HepG2 (cell line): ENCODE measurements at regions of chr3 and their contacts with region 1.

Region 1: DNA sequence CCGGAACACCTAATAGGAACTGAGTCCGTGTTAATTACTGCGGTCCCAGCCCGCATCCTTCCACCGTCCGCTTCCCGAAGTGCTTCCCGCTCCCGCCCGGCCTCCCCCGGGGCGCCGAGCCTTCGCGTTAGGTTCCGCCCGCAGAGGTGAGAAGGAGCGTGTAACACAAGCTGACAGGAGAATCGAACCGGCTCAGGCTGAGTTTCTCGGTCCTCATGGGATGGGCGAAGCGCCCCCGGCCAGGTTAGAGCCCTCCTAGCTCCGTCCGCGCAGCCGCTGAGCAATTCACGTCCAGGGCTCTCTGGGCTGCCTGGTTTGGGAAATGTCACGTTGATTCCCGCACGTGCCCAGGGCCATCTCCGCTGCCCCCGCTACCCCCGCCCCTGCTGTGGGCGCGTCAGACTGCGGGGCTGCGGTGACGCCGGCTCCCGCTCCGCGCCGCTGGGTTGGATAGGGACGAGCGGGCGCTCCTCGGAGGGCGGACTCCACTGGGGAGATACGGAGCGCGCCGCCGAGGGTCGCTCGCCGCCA is 954 bp downstream of the CLDN11 start:
- DNase-seq: no peak
- ATAC-seq: no peak
- H3K4me3 ChIP-seq: no peak overlapping the region
- H3K27ac ChIP-seq: no peak overlapping the region
- H3K4me1 ChIP-seq: peaks cover 58% of the 10 kb centered on the region
- H3K27me3 ChIP-seq: no peaks in the 10 kb centered on the region; a peak in 1 of 5 replicates
- CTCF ChIP-seq: no peak
- EP300 ChIP-seq: no peak
- POLR2A ChIP-seq: no peak
- RAD21 ChIP-seq: no peak

Region 2: DNA sequence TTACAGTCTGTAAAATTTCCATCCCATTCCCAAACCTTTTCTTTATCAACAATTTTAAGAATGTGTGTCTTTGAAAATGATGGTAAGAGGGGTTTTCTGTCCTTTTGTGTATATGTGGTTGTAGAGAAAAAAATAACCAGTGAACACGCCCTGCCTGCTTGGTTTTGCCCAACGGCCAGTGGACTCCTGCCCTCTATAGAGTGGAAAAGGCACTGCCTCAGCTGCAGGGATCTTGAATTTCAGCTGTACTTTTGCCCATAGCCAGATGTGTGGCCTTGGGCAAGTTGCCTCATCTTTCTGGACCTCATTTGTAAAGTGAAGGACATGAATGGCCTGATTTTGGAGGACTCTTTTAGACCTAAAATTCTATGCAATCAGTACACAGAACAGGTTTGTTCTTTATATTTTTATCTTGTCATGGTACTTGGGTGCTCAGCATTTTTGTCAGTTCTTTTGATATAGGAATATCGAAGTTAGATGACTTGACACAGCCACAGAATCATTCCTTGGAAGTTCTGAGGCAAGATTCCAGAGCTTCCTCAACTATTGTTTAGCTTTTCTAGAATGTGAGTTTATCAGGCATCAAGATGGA is 80.0 kb after region 1 on chr3:
- CTCF ChIA-PET with region 1: interaction called, 16 read pairs
- POLR2A ChIA-PET with region 1: no interaction called
- in situ Hi-C with region 1: loop called (anchors 5 kb)
- intact Hi-C with region 1: loop called (anchors 1 kb)
- DNase-seq: peak; percentile 79
- ATAC-seq: peak; percentile 99
- H3K4me3 ChIP-seq: no peak overlapping the region
- H3K27ac ChIP-seq: no peak overlapping the region
- H3K4me1 ChIP-seq: peaks cover 29% of the 10 kb centered on the region
- H3K27me3 ChIP-seq: no peaks in the 10 kb centered on the region
- CTCF ChIP-seq: peak; percentile 93
- EP300 ChIP-seq: no peak
- POLR2A ChIP-seq: no peak
- RAD21 ChIP-seq: peak; percentile 79